ENCODE measurements at regions of chr15 and their contacts with region 1.

Region 1: DNA sequence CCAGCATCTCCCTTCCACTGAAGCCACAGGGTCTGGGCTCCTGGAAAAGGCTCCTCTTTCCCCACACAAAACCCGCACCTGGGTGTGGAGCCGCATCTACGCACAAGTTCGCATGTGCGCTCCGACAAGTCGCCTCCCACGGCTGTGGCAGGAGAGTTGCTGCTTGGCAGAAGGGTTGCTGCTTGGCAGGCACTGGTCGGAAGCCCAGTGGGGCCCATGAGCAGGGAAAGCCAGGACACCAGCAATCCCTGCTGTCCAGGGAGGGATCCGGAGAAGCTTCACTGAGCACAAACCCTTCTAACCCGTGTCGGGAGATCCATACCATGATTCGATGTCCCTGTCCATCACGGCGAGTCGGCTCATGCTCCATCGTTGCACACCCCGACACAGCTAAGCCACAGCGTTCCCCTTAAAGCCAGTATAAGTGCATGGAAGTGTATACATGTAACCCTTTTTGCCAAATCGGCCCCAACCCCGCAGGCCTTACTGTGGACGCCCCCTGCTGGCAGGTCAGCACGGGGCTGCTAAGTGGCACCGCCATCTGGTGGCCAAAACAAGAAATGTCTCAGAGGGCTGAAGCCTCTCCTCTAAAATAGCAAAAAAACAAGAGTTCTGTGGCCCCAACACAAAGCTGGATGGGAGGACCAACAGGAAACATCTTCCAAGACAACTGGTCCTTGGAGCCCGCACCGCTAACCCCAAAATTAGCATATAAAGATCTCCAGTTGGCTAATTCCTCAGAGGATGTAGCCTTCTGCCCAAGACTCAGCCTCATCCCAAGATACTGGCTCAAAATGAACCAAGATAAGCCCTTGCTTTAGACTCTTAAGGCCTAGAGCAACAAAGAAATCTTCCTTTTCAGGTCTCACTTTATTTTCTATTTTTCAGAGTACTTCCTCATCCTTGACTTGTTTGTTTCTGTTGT is 8.3 kb downstream of the ANKRD63 start:
- DNase-seq: peak; percentile 91
- H3K4me3 Mint-ChIP-seq: no peak overlapping the region
- H3K27ac Mint-ChIP-seq: peak overlapping the region; percentile 28
- H3K4me1 Mint-ChIP-seq: peaks cover 6% of the 10 kb centered on the region
- H3K27me3 Mint-ChIP-seq: peaks cover 27% of the 10 kb centered on the region

Region 2: DNA sequence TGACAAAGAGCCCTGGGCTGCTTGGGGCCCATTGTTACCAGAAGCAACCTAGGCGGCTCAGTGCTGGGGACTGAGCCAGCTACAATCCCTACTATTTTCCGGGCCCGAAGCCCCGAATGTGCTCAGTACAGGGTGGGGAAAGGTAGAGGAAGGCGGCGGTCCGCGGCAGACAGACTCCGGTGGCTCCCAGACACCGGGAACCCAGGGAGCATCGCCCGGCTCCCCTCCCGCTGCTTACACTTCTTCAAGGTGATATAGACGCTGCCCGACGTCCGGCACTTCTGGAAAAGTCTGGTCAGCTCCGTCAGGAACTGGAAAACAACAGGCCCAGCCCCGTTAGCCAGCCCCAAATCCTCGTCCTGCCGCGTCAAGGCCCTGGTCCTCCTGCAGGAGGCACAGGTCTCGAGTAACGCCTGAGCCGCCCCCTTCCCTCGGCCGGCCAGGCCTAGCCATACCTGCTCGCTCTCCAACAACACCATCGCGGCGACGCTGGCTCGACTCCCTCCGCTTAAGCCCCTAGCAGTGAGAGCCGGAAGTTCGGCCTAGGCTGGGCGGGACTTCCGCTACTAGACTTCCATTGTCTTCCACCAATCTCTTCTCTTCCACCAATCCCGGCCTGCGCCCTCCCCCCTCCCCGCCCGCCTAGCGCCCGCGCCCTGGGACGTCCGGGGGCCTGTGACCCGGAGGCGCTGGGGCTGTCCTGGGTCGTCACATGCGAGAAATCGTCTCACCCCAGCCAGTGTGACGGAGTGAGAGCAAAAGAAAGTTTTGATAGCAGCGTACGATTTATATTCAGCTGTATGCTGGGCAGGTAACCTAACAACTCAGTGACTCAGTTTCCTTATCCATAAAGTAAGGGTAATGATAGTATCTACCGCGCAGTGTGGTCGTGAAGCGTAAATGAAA is 235.7 kb before region 1 on chr15 and contains the start of gene SRP14:
- CTCF ChIA-PET with region 1: interaction called, 195 read pairs
- POLR2A ChIA-PET with region 1: no interaction called
- intact Hi-C with region 1: no loop called
- DNase-seq: peak; percentile 97
- H3K4me3 Mint-ChIP-seq: peak within 1 kb of the TSS; percentile 98
- H3K27ac Mint-ChIP-seq: peak within 1 kb of the TSS; percentile 91
- H3K4me1 Mint-ChIP-seq: peaks cover 27% of the 10 kb centered on the region
- H3K27me3 Mint-ChIP-seq: no peaks in the 10 kb centered on the region
- total RNA-seq, gene SRP14: 168 to 170 TPM

Region 3: DNA sequence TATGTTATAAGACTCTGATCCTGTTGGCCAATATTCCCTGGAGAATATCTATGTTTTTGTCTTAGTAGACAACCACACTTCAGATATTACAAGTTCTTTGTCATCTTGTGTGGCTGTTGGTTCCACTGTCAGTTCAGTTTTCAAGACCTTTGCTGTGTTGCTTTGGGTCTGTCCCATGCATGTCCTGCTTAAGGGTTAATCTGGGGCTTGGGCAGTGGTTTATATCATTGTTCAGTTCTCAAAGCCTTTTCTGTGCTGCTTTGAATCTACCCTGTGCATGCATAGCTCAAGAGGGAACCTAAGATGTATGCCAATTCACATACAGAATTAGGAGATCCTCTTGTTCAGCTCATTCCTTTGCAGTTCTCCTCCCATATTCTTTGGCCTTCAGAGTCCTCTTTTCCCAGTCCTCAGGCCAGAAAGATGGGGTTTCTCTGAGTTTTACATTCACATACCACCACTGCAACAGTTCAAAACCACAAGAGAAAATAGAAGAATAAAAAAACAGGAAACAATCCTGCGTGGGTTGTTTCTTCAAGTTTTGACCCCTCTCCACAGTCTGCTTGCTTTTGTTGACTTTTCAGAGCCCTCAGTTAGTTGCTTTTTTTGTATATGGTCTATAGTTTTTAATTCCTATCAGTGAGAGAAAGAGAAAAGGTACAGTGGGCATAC is 92.1 kb before region 1 on chr15:
- CTCF ChIA-PET with region 1: interaction called, 12 read pairs
- POLR2A ChIA-PET with region 1: no interaction called
- intact Hi-C with region 1: no loop called
- DNase-seq: no peak
- H3K4me3 Mint-ChIP-seq: no peak overlapping the region
- H3K27ac Mint-ChIP-seq: peak overlapping the region; percentile 52
- H3K4me1 Mint-ChIP-seq: peaks cover 27% of the 10 kb centered on the region
- H3K27me3 Mint-ChIP-seq: no peaks in the 10 kb centered on the region

Region 4: GRCh38 chr15:40238532-40239403 is 35.8 kb before region 1 on chr15 and contains the start of gene PAK6:
- CTCF ChIA-PET with region 1: interaction called, 25 read pairs
- POLR2A ChIA-PET with region 1: no interaction called
- intact Hi-C with region 1: no loop called
- DNase-seq: peak; percentile 63
- H3K4me3 Mint-ChIP-seq: peak within 1 kb of the TSS; percentile 2
- H3K27ac Mint-ChIP-seq: no peak within 1 kb of the TSS
- H3K4me1 Mint-ChIP-seq: peaks cover 3% of the 10 kb centered on the region
- H3K27me3 Mint-ChIP-seq: peaks cover 21% of the 10 kb centered on the region
- total RNA-seq, gene PAK6: 0.69 to 0.73 TPM

Region 5: GRCh38 chr15:40290918-40291574 is 16.4 kb after region 1 on chr15:
- CTCF ChIA-PET with region 1: interaction called, 46 read pairs
- POLR2A ChIA-PET with region 1: interaction called, 3 read pairs
- intact Hi-C with region 1: no loop called
- DNase-seq: no peak
- H3K4me3 Mint-ChIP-seq: no peak overlapping the region
- H3K27ac Mint-ChIP-seq: no peak overlapping the region
- H3K4me1 Mint-ChIP-seq: no peaks in the 10 kb centered on the region
- H3K27me3 Mint-ChIP-seq: no peaks in the 10 kb centered on the region

Region 6: GRCh38 chr15:40338041-40338657 is 63.5 kb after region 1 on chr15:
- CTCF ChIA-PET with region 1: interaction called, 248 read pairs
- POLR2A ChIA-PET with region 1: no interaction called
- intact Hi-C with region 1: loop called (anchors 1 kb)
- DNase-seq: peak; percentile 84
- H3K4me3 Mint-ChIP-seq: peak overlapping the region; percentile 26
- H3K27ac Mint-ChIP-seq: peak overlapping the region; percentile 5
- H3K4me1 Mint-ChIP-seq: peaks cover 11% of the 10 kb centered on the region
- H3K27me3 Mint-ChIP-seq: no peaks in the 10 kb centered on the region